ENCODE measurements at regions of chr18 and their contacts with region 1.

Region 1: GRCh38 chr18:3665780-3666525 is 216.0 kb downstream of the TGIF1 start:
- DNase-seq: peak; percentile 59
- H3K4me3 Mint-ChIP-seq: peak overlapping the region; percentile 57
- H3K27ac Mint-ChIP-seq: no peak overlapping the region
- H3K4me1 Mint-ChIP-seq: peaks cover 42% of the 10 kb centered on the region
- H3K27me3 Mint-ChIP-seq: peaks cover 5% of the 10 kb centered on the region

Region 2: DNA sequence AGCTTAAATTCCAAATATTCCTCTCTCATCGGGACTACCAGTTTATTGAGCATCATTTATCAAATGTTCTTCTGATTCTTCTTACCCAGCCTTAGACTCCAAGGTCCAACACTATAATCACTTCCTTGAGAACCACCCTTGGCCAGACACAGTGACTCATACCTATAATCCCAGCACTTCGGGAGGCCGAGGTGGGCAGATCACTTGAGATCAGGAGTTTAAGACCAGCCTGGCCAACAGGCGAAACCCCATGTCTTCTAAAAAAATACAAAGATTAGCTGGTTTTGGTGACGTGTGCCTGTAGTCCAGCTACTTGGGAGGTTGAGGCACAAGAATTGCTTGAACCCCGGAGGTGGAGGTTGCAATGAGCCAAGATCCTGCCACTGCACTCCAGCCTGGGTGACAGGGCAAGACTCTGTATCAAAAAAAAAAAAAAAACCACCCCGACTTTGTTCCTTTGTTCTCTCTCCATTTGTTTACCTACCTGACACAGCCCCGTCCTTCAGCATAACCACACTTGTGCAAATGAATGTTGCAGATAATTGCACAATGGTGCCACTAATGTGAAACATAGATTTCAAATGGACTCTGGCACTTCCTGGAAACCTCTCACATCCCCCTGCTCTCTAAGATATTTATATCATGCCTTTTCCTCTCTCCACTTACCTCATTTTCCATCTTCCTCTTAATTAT is 614.1 kb before region 1 on chr18:
- intact Hi-C with region 1: no loop called
- DNase-seq: no peak
- H3K4me3 Mint-ChIP-seq: no peak overlapping the region
- H3K27ac Mint-ChIP-seq: peak overlapping the region; percentile 67
- H3K4me1 Mint-ChIP-seq: peaks cover 40% of the 10 kb centered on the region
- H3K27me3 Mint-ChIP-seq: no peaks in the 10 kb centered on the region

Region 3: DNA sequence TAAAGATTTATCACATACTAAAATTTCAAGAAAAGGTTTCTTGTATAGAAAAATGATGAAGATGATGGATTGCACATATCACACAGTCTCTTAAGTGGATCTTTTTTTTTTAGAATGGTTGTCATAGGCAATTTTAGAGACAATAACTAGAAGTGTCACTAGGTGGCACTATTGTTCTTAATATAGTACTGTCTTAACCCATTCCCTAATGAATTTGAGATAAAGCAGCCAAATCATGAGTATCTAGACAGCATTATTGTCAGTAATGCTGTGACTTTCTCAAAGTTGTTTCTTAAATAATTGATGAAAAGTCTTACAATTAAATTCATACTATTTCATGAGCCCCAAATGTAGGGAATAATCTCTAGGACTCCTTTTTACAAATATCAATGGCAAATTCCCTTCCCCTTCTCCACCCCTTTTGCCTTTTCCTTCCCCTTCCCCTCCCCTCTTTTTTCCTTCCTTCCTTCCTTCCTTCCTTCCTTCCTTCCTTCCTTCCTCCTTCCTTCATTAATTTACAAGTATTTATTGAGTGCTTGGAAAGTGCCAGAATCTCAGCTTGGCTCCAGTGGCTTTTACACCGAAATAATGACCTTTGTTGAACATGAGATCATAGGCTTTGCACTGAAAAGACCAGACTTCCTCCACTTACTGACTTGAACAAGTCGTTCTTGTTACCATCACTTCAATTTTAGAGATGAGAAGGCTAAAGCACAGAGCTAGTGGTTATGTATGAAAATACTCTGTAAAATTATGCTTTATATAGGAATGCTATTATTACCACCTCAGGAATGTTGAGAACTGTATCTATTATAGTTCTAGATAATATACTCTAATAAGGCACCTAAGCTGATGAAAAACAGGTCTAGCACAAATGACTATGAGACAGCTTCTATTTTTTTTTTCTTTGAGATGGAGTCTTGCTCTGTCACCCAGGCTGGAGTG is 384.2 kb before region 1 on chr18:
- intact Hi-C with region 1: loop called (anchors 1 kb)
- DNase-seq: no peak
- H3K4me3 Mint-ChIP-seq: no peak overlapping the region
- H3K27ac Mint-ChIP-seq: no peak overlapping the region
- H3K4me1 Mint-ChIP-seq: peaks cover 5% of the 10 kb centered on the region
- H3K27me3 Mint-ChIP-seq: peaks cover 2% of the 10 kb centered on the region

Region 4: GRCh38 chr18:3321133-3321812 is 344.7 kb before region 1 on chr18:
- intact Hi-C with region 1: loop called (anchors 1 kb)
- DNase-seq: no peak
- H3K4me3 Mint-ChIP-seq: no peak overlapping the region
- H3K27ac Mint-ChIP-seq: no peak overlapping the region
- H3K4me1 Mint-ChIP-seq: peaks cover 12% of the 10 kb centered on the region
- H3K27me3 Mint-ChIP-seq: peaks cover 6% of the 10 kb centered on the region

Region 5: GRCh38 chr18:3454365-3455089 is 211.4 kb before region 1 on chr18:
- intact Hi-C with region 1: loop called (anchors 1 kb)
- DNase-seq: no peak
- H3K4me3 Mint-ChIP-seq: peak overlapping the region; percentile 90
- H3K27ac Mint-ChIP-seq: peak overlapping the region; percentile 99
- H3K4me1 Mint-ChIP-seq: peaks cover 71% of the 10 kb centered on the region
- H3K27me3 Mint-ChIP-seq: peaks cover 2% of the 10 kb centered on the region

Region 6: DNA sequence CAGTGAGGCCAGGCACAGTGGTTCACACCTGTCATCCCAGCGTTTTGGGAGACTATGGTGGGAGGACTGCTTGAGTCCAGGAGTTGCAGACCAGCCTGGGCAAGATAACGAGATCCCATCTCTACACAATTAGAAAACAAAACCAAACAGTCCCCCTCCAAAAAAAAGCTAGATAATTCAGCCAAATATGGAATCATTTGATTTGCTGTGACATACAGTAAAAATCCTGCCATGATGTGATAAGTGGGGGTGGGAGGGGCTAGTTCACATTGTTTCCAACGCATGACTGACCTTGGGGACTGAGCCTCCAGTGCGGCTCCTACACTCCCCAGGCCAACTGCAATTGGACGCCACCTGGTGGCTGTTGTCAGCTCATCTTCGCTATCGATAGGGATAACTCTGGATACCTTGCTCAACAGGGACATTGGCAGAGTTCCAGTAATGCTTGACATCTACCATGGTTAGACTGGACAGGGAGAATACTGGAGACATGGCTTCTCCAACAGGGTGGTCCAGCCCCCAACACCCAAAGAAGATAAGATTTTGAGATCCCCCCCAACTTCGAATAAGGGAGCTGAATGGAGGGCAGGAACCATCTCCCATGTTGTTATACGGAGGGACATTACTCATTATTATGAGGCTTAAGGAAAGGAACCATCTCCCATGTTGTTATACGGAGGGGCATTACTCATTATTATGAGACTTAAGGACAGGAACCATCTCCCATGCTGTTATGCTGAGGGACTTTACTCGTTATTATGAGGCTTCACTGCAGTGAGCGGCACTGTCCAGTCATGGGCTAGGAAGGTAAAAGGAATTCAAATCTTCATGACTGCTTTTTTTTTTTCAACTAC is 80.1 kb before region 1 on chr18:
- intact Hi-C with region 1: loop called (anchors 1 kb)
- DNase-seq: peak; percentile 54
- H3K4me3 Mint-ChIP-seq: no peak overlapping the region
- H3K27ac Mint-ChIP-seq: peak overlapping the region; percentile 69
- H3K4me1 Mint-ChIP-seq: peaks cover 46% of the 10 kb centered on the region
- H3K27me3 Mint-ChIP-seq: peaks cover 3% of the 10 kb centered on the region

Region 7: GRCh38 chr18:3623769-3624545 is 42.0 kb before region 1 on chr18:
- intact Hi-C with region 1: loop called (anchors 1 kb)
- DNase-seq: no peak
- H3K4me3 Mint-ChIP-seq: peak overlapping the region; percentile 47
- H3K27ac Mint-ChIP-seq: peak overlapping the region; percentile 90
- H3K4me1 Mint-ChIP-seq: peaks cover 42% of the 10 kb centered on the region
- H3K27me3 Mint-ChIP-seq: peaks cover 2% of the 10 kb centered on the region

Region 8: GRCh38 chr18:3688699-3689098 is 22.7 kb after region 1 on chr18:
- intact Hi-C with region 1: no loop called
- DNase-seq: no peak
- H3K4me3 Mint-ChIP-seq: no peak overlapping the region
- H3K27ac Mint-ChIP-seq: no peak overlapping the region
- H3K4me1 Mint-ChIP-seq: no peaks in the 10 kb centered on the region
- H3K27me3 Mint-ChIP-seq: peaks cover 7% of the 10 kb centered on the region

Region 9: GRCh38 chr18:4035521-4035920 is 369.6 kb after region 1 on chr18:
- intact Hi-C with region 1: no loop called
- DNase-seq: no peak
- H3K4me3 Mint-ChIP-seq: no peak overlapping the region
- H3K27ac Mint-ChIP-seq: no peak overlapping the region
- H3K4me1 Mint-ChIP-seq: no peaks in the 10 kb centered on the region
- H3K27me3 Mint-ChIP-seq: peaks cover 2% of the 10 kb centered on the region

Measured in activated T-helper 1 cell treated with anti-CD3 and anti-CD28 coated beads, Interleukin-12 subunit alpha, Interleukin-12 subunit beta, Interleukin-2, Interleukin-4 antibody, amounts not matched to agents 30 ng/mL and 10 ng/mL and 1 ng/mL, durations not matched to agents 14 hours and 24 hours and 36 hours (primary cell).